ENCODE measurements at regions of chr20 and their contacts with region 1.

Region 1: DNA sequence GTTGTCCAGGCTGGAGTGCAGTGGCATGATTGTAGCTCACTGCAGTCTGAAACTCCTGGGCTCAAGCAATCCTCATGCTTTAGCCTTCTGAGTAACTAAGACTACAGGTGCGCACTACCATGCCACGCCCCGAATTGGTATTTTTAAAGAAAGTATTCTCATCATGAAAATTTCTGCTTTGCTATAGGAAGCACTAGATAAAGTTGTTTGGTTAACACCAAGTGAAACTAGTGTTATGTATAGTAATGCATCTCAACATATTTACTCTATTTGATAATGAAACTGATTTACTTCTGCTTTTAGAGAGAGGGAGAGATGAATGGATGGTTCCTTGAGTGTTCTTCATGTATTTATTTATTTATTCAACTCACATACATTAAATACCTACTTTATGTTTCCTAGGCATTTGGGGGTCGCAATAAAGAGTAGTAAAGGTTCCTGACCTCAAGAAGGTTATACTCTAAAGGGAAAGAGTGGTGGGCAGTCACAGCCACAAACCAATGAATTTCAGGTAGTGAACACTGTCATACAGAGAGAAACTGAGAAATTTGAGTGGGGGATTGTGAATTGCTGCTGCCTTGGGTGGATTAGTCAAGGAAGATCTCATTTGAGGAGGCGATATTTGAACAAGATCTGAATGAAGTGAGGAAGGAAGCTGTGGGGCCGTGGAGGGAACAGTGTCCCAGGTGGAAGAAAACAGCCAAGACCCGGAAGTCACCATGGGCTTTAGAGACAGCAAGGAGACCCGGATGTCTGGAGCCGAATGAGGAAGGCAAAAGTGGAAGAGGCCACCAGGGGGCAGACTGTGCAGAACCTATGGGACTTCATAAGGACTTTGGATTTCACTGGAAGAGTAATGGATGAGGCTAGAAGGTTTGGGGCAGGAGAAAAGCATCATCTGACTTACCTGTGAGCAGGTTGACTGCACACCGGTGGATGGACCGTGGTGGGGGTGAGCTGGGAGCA is 185.6 kb downstream of the TSHZ2 start:
- DNase-seq: peak; percentile 77
- H3K4me3 ChIP-seq: no peak overlapping the region
- H3K27ac ChIP-seq: no peak overlapping the region
- H3K4me1 ChIP-seq: peaks cover 8% of the 10 kb centered on the region
- H3K27me3 ChIP-seq: no peaks in the 10 kb centered on the region
- CTCF ChIP-seq: peak; percentile 76

Region 2: DNA sequence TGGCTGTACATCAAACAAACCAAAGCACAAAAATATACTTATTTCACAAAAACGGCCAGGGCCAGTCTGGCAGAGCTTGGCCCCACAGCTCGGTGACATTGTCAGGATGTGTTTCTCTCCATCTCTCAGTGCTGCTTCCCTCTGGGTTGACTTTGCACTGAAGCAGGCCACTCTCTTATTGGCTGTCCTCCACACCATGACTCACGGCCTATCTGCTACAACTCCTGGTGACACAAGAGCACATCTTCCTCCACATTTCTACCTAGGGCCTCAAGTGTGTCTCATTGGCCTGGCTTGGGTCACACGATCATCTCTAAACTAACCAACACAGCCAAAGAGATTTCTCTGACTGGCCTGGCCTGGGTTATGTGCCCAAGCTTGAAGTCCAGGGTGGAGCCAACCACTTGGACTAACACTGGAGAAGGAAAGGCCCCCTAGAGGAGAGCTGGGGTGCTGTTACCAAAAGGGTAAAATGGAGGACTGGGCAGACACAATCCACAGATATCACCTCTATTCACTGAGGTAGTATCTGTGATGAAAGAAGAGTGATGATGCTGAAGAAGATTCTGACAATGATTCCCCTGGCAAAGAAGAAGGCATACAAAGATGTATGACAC is 345.4 kb before region 1 on chr20:
- CTCF ChIA-PET with region 1: no interaction called
- POLR2A ChIA-PET with region 1: interaction called, 12 read pairs
- intact Hi-C with region 1: no loop called
- DNase-seq: peak; percentile 18
- H3K4me3 ChIP-seq: no peak overlapping the region
- H3K27ac ChIP-seq: no peak overlapping the region
- H3K4me1 ChIP-seq: no peaks in the 10 kb centered on the region
- H3K27me3 ChIP-seq: no peaks in the 10 kb centered on the region
- CTCF ChIP-seq: peak; percentile 30; the same call in 1 of the 2 replicates

Region 3: GRCh38 chr20:52828199-52828598 is 329.5 kb before region 1 on chr20:
- CTCF ChIA-PET with region 1: no interaction called
- POLR2A ChIA-PET with region 1: no interaction called
- intact Hi-C with region 1: loop called (anchors 10 kb)
- DNase-seq: no peak
- H3K4me3 ChIP-seq: no peak overlapping the region
- H3K27ac ChIP-seq: no peak overlapping the region
- H3K4me1 ChIP-seq: no peaks in the 10 kb centered on the region
- H3K27me3 ChIP-seq: no peaks in the 10 kb centered on the region
- CTCF ChIP-seq: no peak

Measured in A673 (cell line).